Mammary epithelial cell (primary cell): ENCODE measurements at regions of chr17 and their contacts with region 1.

Region 1: GRCh38 chr17:27666831-27667560 is 36.0 kb downstream of the LGALS9 start:
- DNase-seq: no peak
- H3K4me3 ChIP-seq: no peak overlapping the region
- H3K27ac ChIP-seq: no peak overlapping the region
- H3K4me1 ChIP-seq: no peaks in the 10 kb centered on the region
- H3K27me3 ChIP-seq: no peaks in the 10 kb centered on the region
- CTCF ChIP-seq: no peak

Region 2: DNA sequence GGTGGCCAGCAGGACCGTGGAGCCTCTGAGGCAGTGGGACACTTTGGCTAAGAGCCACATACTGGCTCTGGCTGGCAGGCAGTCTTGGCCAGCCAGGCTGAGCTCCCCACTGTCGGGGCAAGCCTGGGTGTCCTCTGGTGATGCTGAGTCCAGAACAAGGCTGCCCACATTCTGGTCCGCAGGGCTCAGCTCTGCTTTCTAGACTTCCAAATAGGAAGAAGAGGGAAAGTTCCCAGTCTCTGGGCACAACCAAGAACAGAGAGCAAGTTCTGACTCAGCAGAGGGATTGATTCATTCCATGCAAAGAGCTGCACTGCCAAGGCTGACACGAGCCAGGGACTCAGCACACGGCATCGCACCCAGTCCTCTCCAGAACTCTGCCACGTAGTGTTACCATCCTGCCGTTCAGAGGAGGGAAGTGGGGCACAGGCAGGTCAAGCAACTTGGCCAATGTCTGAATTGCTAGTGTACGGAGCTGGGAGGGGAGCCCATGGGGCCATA is 74.4 kb after region 1 on chr17:
- CTCF ChIA-PET with region 1: no interaction called
- dilution Hi-C with region 1: no loop called
- in situ Hi-C with region 1: loop called in 1 of 2 experiments (anchors 5 kb)
- intact Hi-C with region 1: no loop called
- DNase-seq: peak; percentile 8
- H3K4me3 ChIP-seq: no peak overlapping the region
- H3K27ac ChIP-seq: no peak overlapping the region
- H3K4me1 ChIP-seq: no peaks in the 10 kb centered on the region
- H3K27me3 ChIP-seq: no peaks in the 10 kb centered on the region
- CTCF ChIP-seq: no peak